A673 (cell line): ENCODE measurements at regions of chr13 and their contacts with region 1.

Region 1: GRCh38 chr13:28239374-28239773 is 101.0 kb downstream of the PAN3 start:
- DNase-seq: peak; percentile 9
- H3K4me3 ChIP-seq: no peak overlapping the region
- H3K27ac ChIP-seq: no peak overlapping the region
- H3K4me1 ChIP-seq: peaks cover 3% of the 10 kb centered on the region
- H3K27me3 ChIP-seq: no peaks in the 10 kb centered on the region
- CTCF ChIP-seq: no peak

Region 2: DNA sequence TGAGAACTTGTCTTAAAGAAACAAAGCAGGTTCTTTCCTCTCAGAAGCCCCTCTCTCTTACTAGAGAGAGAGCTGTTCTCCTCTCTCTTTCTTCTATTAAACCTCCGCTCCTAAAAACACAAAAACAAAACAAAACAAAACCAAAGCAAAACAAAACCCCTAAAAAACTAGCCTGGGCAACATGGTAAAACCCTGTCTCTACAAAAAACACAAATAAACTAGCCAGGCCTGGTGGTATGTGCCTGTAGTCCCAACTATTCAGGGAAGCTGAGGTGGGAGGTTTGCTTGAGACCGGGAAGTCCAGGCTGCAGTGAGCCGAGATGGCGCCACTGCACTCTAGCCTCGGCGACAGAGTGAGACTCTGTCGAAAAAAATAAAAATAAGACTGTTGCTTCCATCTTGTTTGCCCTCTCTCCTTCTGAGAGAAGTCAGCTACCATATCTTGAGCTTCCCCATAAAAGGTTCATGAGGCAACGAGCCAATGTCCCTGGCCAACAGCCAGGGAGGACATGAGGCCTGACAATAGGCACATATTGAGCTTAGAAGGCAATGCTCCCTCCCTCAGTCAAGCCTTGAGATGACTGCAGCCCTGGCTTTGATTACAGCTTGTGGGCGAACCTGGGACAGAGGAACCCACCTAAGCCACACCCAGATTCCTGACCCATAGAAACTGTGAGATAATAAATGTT is 121.5 kb before region 1 on chr13:
- CTCF ChIA-PET with region 1: no interaction called
- POLR2A ChIA-PET with region 1: no interaction called
- intact Hi-C with region 1: no loop called
- DNase-seq: peak; percentile 49
- H3K4me3 ChIP-seq: no peak overlapping the region
- H3K27ac ChIP-seq: no peak overlapping the region
- H3K4me1 ChIP-seq: no peaks in the 10 kb centered on the region
- H3K27me3 ChIP-seq: no peaks in the 10 kb centered on the region
- CTCF ChIP-seq: 0 out of 2 replicates have a peak, but pooled peaks have one; percentile 19

Region 3: DNA sequence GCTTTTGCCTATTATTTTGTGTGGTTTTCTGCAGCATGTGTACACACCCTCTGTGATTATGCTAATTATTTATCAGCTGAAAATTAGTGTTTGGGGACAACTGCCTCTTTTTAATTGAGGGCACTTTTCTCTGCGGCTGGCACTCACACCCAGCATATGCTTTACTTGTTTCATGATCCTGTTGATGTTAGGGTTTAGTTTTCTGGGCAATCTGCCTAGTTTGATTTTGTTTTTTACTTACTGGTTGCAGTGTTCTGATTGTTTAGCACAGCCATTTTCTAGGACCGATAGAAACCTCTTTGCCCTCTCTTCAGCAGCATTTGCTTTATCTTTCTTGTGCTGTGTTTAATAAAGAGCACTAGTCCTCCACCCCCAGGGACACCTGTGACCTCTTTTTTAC is 60.5 kb after region 1 on chr13:
- CTCF ChIA-PET with region 1: no interaction called
- POLR2A ChIA-PET with region 1: no interaction called
- intact Hi-C with region 1: no loop called
- DNase-seq: no peak
- H3K4me3 ChIP-seq: no peak overlapping the region
- H3K27ac ChIP-seq: no peak overlapping the region
- H3K4me1 ChIP-seq: peaks cover 6% of the 10 kb centered on the region
- H3K27me3 ChIP-seq: no peaks in the 10 kb centered on the region
- CTCF ChIP-seq: no peak

Region 4: GRCh38 chr13:28527411-28528028 is 288.1 kb after region 1 on chr13:
- CTCF ChIA-PET with region 1: no interaction called
- POLR2A ChIA-PET with region 1: no interaction called
- intact Hi-C with region 1: no loop called
- DNase-seq: no peak
- H3K4me3 ChIP-seq: no peak overlapping the region
- H3K27ac ChIP-seq: no peak overlapping the region
- H3K4me1 ChIP-seq: peaks cover 20% of the 10 kb centered on the region
- H3K27me3 ChIP-seq: no peaks in the 10 kb centered on the region
- CTCF ChIP-seq: no peak

Region 5: DNA sequence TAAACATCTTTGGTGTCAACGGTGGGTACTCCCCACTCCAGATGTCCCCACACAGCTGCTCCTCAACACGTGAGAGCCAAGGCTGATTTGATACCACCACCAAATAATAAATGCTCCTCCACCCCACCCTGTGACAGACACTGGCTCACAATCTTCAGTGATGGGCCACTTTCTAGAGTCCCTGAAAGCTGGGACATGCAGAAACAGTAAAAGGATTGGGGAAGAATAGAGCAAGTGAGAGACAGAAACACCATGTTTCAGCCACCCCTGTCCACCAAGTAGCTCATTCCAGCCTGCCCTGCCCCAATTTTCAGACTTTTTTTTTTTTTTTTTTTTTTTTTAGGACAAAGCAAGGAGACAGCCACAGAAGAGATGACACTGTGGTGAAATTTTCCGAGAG is 477.8 kb after region 1 on chr13:
- CTCF ChIA-PET with region 1: no interaction called
- POLR2A ChIA-PET with region 1: interaction called, 10 read pairs
- intact Hi-C with region 1: no loop called
- DNase-seq: no peak
- H3K4me3 ChIP-seq: no peak overlapping the region
- H3K27ac ChIP-seq: no peak overlapping the region
- H3K4me1 ChIP-seq: peaks cover 14% of the 10 kb centered on the region
- H3K27me3 ChIP-seq: no peaks in the 10 kb centered on the region
- CTCF ChIP-seq: no peak

Region 6: DNA sequence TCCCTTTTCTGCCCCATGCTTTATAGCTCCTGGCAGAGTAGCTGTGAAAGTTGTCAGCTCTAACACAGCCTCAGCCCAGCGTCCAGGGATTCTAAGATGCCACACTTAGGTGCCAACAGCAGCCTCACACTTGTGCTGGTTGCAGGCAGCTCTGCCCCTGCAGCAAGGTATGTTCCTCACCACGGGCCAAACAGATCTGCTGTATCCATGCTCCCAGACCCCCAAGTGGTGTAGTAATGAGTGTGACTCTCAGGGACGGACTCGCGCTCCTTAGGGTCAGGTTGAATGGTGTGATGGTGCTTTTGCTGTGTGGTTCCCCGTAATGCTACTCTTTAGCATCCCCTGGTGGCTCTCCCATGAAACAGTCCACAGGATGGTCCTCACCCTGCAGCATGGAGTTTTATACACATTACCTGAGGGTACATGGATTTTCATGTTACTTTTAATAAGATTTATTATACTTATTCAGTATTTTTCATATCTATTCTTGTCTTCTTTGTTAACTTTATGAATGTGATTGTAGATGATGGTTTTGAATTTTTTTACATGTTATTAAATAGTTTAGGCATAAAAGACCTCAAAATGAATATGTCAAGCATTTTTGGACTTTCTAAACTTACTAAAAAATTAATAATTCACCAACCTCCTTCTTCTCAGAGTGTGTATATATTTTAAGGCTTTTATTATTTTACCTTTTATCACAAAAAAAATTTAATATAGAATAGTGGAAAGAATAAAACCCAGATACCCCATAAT is 1123.7 kb after region 1 on chr13:
- CTCF ChIA-PET with region 1: no interaction called
- POLR2A ChIA-PET with region 1: no interaction called
- intact Hi-C with region 1: no loop called
- DNase-seq: peak; percentile 66
- H3K4me3 ChIP-seq: no peak overlapping the region
- H3K27ac ChIP-seq: no peak overlapping the region
- H3K4me1 ChIP-seq: no peaks in the 10 kb centered on the region
- H3K27me3 ChIP-seq: no peaks in the 10 kb centered on the region
- CTCF ChIP-seq: peak; percentile 92